ENCODE measurements at regions of chr3 and their contacts with region 1.

Region 1: GRCh38 chr3:170357176-170357919 is at the start of gene SKIL:
- DNase-seq: peak; percentile 95 to 96
- H3K4me3 ChIP-seq: peak within 1 kb of the TSS; percentile 95
- H3K4me3 Mint-ChIP-seq: peak within 1 kb of the TSS; percentile 92
- H3K27ac Mint-ChIP-seq: peak within 1 kb of the TSS; percentile 98
- H3K4me1 ChIP-seq: peaks cover 5% of the 10 kb centered on the region
- H3K4me1 Mint-ChIP-seq: peaks cover 19% of the 10 kb centered on the region
- H3K27me3 ChIP-seq: no peaks in the 10 kb centered on the region
- H3K27me3 Mint-ChIP-seq: no peaks in the 10 kb centered on the region
- CTCF ChIP-seq: peak in 1 of 2 experiments; percentile 34
- total RNA-seq, gene SKIL: 19.6 and 20.5 TPM in 2 replicates

Region 2: DNA sequence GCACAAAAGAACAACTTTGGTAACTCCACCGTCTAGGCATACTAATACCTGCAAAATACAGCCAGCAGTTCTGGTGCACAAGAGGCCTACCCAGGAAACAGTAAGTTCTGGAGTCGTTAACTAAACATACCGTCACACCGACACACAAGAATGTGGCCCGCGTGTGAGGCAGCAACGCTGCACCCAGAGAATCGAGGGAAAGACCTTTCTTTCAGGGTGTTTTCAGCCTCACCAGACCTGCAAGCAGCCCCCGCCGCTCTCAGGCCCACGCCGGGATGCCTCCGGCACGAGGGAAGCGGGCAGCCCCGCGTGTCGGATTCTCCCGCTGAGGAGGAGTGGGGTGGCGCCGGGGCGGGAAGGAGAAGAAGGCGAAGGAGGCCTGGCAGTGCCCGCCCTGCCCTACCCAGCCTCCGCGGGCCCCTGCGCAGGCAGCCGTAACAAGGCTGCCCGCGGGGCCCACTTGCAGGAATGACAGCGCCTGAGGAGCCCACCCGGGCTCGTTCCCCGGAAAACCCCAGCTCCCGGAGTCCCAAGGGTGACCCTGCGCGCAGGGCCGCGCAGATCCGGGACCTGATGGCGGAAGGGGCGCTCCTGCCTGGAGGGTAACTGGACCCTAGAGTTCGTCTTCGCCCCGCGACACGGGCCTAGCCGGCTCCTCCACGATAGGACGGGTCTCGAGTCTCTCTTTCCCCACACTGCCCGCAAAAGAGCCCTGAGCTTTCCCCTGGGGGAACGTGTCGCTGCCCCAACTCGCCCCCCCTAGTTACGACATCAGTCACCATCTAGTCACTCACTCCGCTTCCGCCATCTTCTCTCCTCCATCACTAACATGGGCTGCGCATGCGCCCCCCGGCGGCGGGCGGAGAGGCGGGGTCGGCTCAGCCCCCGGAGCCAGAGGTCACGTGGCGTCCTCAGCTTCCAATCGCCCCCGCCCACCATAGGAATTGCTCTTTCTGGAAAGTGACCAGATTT is 176.2 kb before region 1 on chr3 and contains the start of gene PHC3:
- CTCF ChIA-PET with region 1: no interaction called
- POLR2A ChIA-PET with region 1: interaction called, 3 read pairs
- intact Hi-C with region 1: loop called (anchors 2 kb)
- DNase-seq: peak; percentile 93 to 95
- H3K4me3 ChIP-seq: peak within 1 kb of the TSS; percentile 54
- H3K4me3 Mint-ChIP-seq: peak within 1 kb of the TSS; percentile 95
- H3K27ac Mint-ChIP-seq: peak within 1 kb of the TSS; percentile 97
- H3K4me1 ChIP-seq: peaks cover 10% of the 10 kb centered on the region
- H3K4me1 Mint-ChIP-seq: peaks cover 12% of the 10 kb centered on the region
- H3K27me3 ChIP-seq: no peaks in the 10 kb centered on the region
- H3K27me3 Mint-ChIP-seq: no peaks in the 10 kb centered on the region
- CTCF ChIP-seq: peak in 1 of 2 experiments; percentile 8
- total RNA-seq, gene PHC3: 29.8 and 37.7 TPM in 2 replicates

Region 3: GRCh38 chr3:170221924-170222646 is 135.3 kb before region 1 on chr3 and contains the start of gene PRKCI:
- CTCF ChIA-PET with region 1: no interaction called
- POLR2A ChIA-PET with region 1: no interaction called
- intact Hi-C with region 1: loop called (anchors 2 kb)
- DNase-seq: peak; percentile 95 to 97
- H3K4me3 ChIP-seq: peak within 1 kb of the TSS; percentile 91
- H3K4me3 Mint-ChIP-seq: peak within 1 kb of the TSS; percentile 88
- H3K27ac Mint-ChIP-seq: peak within 1 kb of the TSS; percentile 99
- H3K4me1 ChIP-seq: 0 out of 2 replicates have a peak, but pooled peaks cover 5% of the 10 kb centered on the region
- H3K4me1 Mint-ChIP-seq: no peaks in the 10 kb centered on the region
- H3K27me3 ChIP-seq: no peaks in the 10 kb centered on the region
- H3K27me3 Mint-ChIP-seq: no peaks in the 10 kb centered on the region
- CTCF ChIP-seq: no peak
- total RNA-seq, gene PRKCI: 44.2 and 45.8 TPM in 2 replicates

Region 4: GRCh38 chr3:170307671-170308403 is 49.5 kb before region 1 on chr3:
- CTCF ChIA-PET with region 1: interaction called, 3 read pairs
- POLR2A ChIA-PET with region 1: interaction called, 3 read pairs
- intact Hi-C with region 1: loop called (anchors 1 kb)
- DNase-seq: peak; percentile 63 to 66
- H3K4me3 ChIP-seq: no peak overlapping the region
- H3K4me3 Mint-ChIP-seq: peak overlapping the region; percentile 29
- H3K27ac Mint-ChIP-seq: peak overlapping the region; percentile 91
- H3K4me1 ChIP-seq: peaks cover 29% of the 10 kb centered on the region
- H3K4me1 Mint-ChIP-seq: peaks cover 11% of the 10 kb centered on the region
- H3K27me3 ChIP-seq: no peaks in the 10 kb centered on the region
- H3K27me3 Mint-ChIP-seq: no peaks in the 10 kb centered on the region
- CTCF ChIP-seq: no peak

Region 5: DNA sequence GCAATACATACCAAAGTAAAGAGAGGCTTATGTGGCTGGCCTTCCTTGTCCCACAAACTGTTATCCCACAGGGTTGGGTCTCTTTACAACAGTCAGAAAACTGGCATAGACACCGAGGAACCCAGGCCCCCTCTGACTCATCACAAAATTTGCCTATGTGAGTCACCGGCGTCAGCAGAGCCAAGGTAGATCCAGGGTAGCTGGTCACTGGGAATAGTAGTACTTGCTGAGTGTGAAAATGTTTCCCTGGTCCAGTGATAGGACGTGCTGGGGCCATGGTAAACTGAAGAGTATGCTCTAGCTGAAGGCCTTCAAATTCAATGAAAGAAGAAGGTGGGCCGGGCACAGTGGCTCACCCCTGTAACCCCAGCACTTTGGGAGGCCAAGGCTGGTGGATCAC is 27.0 kb before region 1 on chr3:
- CTCF ChIA-PET with region 1: no interaction called
- POLR2A ChIA-PET with region 1: no interaction called
- intact Hi-C with region 1: loop called (anchors 1 kb)
- DNase-seq: peak; percentile 19 to 48
- H3K4me3 ChIP-seq: no peak overlapping the region
- H3K4me3 Mint-ChIP-seq: no peak overlapping the region
- H3K27ac Mint-ChIP-seq: peak overlapping the region; percentile 76
- H3K4me1 ChIP-seq: peaks cover 25% of the 10 kb centered on the region
- H3K4me1 Mint-ChIP-seq: no peaks in the 10 kb centered on the region
- H3K27me3 ChIP-seq: no peaks in the 10 kb centered on the region
- H3K27me3 Mint-ChIP-seq: no peaks in the 10 kb centered on the region
- CTCF ChIP-seq: no peak

Measured in Caco-2 (cell line).